Activated naive CD4-positive, alpha-beta T cell treated with anti-CD3 and anti-CD28 coated beads for 36 hours (primary cell): ENCODE measurements at regions of chr1 and their contacts with region 1.

Region 1: GRCh38 chr1:27489910-27490741 is at the start of gene WASF2:
- DNase-seq: peak; percentile 98
- H3K4me3 Mint-ChIP-seq: peak within 1 kb of the TSS; percentile 89
- H3K27ac Mint-ChIP-seq: peak within 1 kb of the TSS; percentile 99
- H3K4me1 Mint-ChIP-seq: peaks cover 30% of the 10 kb centered on the region
- H3K27me3 Mint-ChIP-seq: no peaks in the 10 kb centered on the region
- total RNA-seq, gene WASF2: 105 to 106 TPM

Region 2: GRCh38 chr1:27416387-27417111 is 73.6 kb before region 1 on chr1:
- CTCF ChIA-PET with region 1: interaction called, 5 read pairs
- intact Hi-C with region 1: loop called (anchors 1 kb)
- DNase-seq: peak; percentile 72
- H3K4me3 Mint-ChIP-seq: no peak overlapping the region
- H3K27ac Mint-ChIP-seq: no peak overlapping the region
- H3K4me1 Mint-ChIP-seq: peaks cover 38% of the 10 kb centered on the region
- H3K27me3 Mint-ChIP-seq: no peaks in the 10 kb centered on the region

Region 3: DNA sequence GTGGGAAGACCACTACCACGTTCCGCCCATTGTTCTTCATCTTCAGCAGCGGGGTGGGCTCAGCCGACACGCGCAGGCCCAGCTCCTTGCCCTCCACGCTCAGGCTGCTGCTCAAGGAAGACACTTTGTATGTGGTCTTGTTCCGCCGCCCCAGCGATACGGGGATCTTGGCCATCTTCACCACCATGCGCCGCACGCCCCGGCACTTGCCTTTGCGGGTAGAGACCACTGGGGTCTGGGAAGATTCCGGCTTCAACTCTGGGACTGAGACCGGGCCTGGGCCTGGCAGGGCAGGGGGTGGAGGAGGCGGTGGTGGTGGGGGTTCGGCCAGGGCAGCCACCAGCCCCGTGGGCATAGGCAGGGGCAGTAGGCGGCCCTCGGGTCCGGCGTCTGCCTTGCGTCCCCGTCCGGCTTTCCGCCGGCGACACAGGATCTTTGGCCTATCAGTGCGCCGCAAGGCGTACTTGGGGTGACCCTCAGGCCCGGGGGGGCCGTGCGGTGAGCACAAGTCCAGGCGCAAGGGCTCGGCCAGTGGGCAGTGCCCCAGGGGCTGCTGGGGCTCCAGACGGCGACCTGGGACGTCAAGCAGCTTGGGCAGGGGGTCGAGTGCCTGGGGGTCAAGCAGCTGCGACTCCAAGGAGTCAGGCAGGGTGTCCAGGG is 60.5 kb after region 1 on chr1:
- CTCF ChIA-PET with region 1: no interaction called
- intact Hi-C with region 1: no loop called
- DNase-seq: no peak
- H3K4me3 Mint-ChIP-seq: no peak overlapping the region
- H3K27ac Mint-ChIP-seq: no peak overlapping the region
- H3K4me1 Mint-ChIP-seq: peaks cover 2% of the 10 kb centered on the region
- H3K27me3 Mint-ChIP-seq: no peaks in the 10 kb centered on the region